IMR-90 (cell line): ENCODE measurements at regions of chr17 and their contacts with region 1.

Region 1: GRCh38 chr17:67689534-67690177 is 28.1 kb upstream of the NOL11 start:
- DNase-seq: peak; percentile 66
- ATAC-seq: peak; percentile 86
- H3K4me3 ChIP-seq: no peak overlapping the region
- H3K27ac ChIP-seq: no peak overlapping the region
- H3K4me1 ChIP-seq: no peaks in the 10 kb centered on the region
- H3K27me3 ChIP-seq: no peaks in the 10 kb centered on the region
- CTCF ChIP-seq: peak; percentile 85
- POLR2A ChIP-seq: no peak; the same call in 1 of the 2 replicates
- RAD21 ChIP-seq: peak; percentile 71

Region 2: GRCh38 chr17:67475236-67475937 is 214.3 kb before region 1 on chr17:
- CTCF ChIA-PET with region 1: no interaction called
- POLR2A ChIA-PET with region 1: no interaction called
- dilution Hi-C with region 1: no loop called
- in situ Hi-C with region 1: no loop called
- intact Hi-C with region 1: loop called (anchors 10 kb)
- DNase-seq: peak; percentile 72
- ATAC-seq: peak; percentile 92
- H3K4me3 ChIP-seq: no peak overlapping the region
- H3K27ac ChIP-seq: no peak overlapping the region
- H3K4me1 ChIP-seq: peaks cover 4% of the 10 kb centered on the region; the same call in 1 of the 2 replicates
- H3K27me3 ChIP-seq: no peaks in the 10 kb centered on the region
- CTCF ChIP-seq: peak; percentile 86
- POLR2A ChIP-seq: no peak
- RAD21 ChIP-seq: peak; percentile 85

Region 3: GRCh38 chr17:67759355-67760171 is 69.9 kb after region 1 on chr17:
- CTCF ChIA-PET with region 1: no interaction called
- POLR2A ChIA-PET with region 1: no interaction called
- dilution Hi-C with region 1: no loop called
- in situ Hi-C with region 1: no loop called
- intact Hi-C with region 1: no loop called
- DNase-seq: peak; percentile 50
- ATAC-seq: peak; percentile 85
- H3K4me3 ChIP-seq: no peak overlapping the region
- H3K27ac ChIP-seq: no peak overlapping the region; the same call in 1 of the 2 replicates
- H3K4me1 ChIP-seq: peaks cover 6% of the 10 kb centered on the region
- H3K27me3 ChIP-seq: no peaks in the 10 kb centered on the region
- CTCF ChIP-seq: no peak
- POLR2A ChIP-seq: no peak
- RAD21 ChIP-seq: no peak